Transverse colon (tissue), 4 donors: ENCODE measurements at regions of chr15 and their contacts with region 1.

Region 1: DNA sequence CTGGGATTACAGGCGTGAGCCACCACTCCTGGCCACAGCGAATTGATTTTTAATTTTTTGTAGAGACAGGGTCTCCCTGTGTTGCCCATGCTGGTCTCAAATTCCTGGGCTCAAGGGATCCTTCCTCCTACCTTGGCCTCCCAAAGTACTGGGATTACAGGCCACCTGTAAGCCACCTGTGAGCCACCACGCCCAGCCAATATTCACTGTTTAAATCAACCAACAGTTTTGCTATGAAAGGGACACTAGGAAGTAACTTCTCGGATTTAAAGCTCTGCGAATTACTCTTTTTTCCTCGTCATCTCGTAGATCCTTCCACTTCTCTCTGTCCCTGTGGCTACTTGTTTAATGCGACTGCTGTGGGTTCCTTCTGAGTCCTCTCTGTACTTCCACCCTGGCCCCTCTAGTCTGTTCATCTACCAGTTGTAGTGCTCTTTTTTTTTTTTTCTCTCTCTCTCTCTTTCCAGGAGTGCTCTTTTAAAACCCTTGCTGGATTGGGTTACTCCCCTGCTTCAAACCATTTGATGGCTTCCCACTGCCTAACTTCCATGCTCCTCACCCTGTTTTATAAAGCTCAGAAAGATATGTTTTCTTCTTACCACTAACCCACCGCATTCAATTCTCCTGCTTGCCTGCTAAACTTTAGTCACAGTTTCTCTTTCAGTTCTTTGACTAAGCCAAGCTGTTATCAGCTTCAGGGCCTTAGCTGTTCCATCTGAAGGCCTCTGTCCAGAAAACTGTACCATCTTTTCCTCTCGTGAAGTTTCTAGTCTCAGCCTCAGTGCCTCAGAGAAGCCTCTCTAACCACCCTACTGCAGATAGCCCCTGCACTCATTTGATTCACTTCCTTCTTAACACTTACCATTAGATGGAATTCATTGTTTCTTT is 12.4 kb downstream of the RTF1 start:
- DNase-seq: peak; percentile 21
- H3K4me3 ChIP-seq: no peak overlapping the region
- H3K27ac ChIP-seq: peak overlapping the region; percentile 26 to 38 (median 28)
- H3K4me1 ChIP-seq: peaks cover 0 to 13% (median 10%) of the 10 kb centered on the region in 4 donors
- H3K27me3 ChIP-seq: no peaks in the 10 kb centered on the region
- CTCF ChIP-seq: no peak
- EP300 ChIP-seq: no peak
- POLR2A ChIP-seq: no peak

Region 2: DNA sequence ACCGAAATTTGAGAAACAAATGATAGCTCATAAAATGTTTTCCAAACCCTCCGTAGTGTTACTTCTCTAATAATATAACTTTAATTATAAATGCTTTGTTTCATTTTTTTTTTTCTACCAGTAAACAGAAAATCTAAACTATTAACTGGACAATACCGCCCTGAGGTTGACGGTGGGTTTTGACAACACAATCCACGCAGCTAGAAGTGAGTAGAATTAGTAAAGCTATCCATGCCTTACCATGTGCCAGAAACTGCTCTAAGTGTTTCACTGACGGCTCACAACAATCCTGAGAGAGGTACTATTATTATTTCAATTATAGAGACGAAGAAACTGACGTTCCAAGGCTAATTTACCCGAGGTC is 27.4 kb before region 1 on chr15:
- in situ Hi-C with region 1: no loop called
- intact Hi-C with region 1: loop called (anchors 1 kb)
- DNase-seq: no peak
- H3K4me3 ChIP-seq: peak overlapping the region; percentile 65 to 85 (median 74)
- H3K27ac ChIP-seq: peak overlapping the region; percentile 89 to 94 (median 90)
- H3K4me1 ChIP-seq: peaks cover 0 to 19% (median 4%) of the 10 kb centered on the region in 4 donors
- H3K27me3 ChIP-seq: no peaks in the 10 kb centered on the region
- CTCF ChIP-seq: no peak
- EP300 ChIP-seq: no peak
- POLR2A ChIP-seq: no peak

Region 3: GRCh38 chr15:41544650-41545015 is 115.4 kb after region 1 on chr15:
- in situ Hi-C with region 1: loop called in 1 of 4 experiments (anchors 25 kb)
- intact Hi-C with region 1: no loop called
- DNase-seq: peak; percentile 31
- H3K4me3 ChIP-seq: peak overlapping the region in 3 of 4 donors; percentile 77 to 97 (median 84)
- H3K27ac ChIP-seq: peak overlapping the region; percentile 76 to 83 (median 80)
- H3K4me1 ChIP-seq: peaks cover 0 to 6% (median 5%) of the 10 kb centered on the region in 4 donors
- H3K27me3 ChIP-seq: no peaks in the 10 kb centered on the region
- CTCF ChIP-seq: no peak
- EP300 ChIP-seq: no peak
- POLR2A ChIP-seq: no peak

Region 4: DNA sequence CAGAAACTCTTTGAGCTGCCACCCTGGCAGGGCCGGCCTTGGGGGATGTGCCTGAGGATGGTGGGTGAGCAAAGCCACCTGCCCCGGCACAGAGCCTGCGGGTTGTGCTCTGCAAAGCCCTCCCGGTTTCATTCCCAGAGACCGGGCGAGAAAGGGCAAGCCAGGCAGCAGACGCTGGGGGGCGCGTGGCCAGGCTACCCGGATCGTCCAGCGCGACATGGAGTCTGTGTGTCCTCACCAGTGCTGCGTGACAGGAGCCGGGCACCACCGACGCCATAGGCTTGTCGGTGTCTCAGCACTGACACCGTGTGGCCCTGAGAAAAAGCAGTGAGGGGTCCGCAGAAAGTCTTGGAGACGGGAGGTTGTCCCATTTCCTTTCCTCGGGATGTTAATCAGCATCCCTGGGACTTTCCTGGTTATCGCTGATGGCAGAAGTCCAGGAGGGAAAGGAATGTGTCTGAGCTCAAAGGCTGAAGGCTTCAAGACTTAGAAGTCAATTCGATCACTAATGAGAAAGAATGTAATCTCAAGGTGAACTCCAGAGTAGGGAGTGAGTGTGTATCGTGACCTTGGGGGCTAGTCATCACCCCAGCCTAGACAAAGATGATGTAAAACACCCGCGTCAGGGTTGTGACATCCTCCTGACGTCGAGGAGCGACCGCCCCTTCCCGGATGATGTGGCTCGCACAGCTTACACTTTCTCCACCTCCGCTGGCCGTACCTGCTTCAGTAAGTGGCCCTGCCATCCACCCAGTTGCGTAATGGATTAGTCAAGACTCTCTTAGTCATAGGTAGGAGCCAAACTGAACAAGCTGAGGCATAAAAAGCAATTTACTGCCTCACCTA is 627.9 kb after region 1 on chr15:
- in situ Hi-C with region 1: no loop called
- intact Hi-C with region 1: no loop called
- DNase-seq: peak; percentile 86
- H3K4me3 ChIP-seq: peak overlapping the region in 3 of 4 donors; percentile 0 to 36 (median 5)
- H3K27ac ChIP-seq: peak overlapping the region; percentile 45 to 78 (median 70)
- H3K4me1 ChIP-seq: peaks cover 4 to 12% (median 6%) of the 10 kb centered on the region in 4 donors
- H3K27me3 ChIP-seq: no peaks in the 10 kb centered on the region
- CTCF ChIP-seq: peak; percentile 43 to 70 (median 49)
- EP300 ChIP-seq: no peak
- POLR2A ChIP-seq: peak; percentile 25

Region 5: DNA sequence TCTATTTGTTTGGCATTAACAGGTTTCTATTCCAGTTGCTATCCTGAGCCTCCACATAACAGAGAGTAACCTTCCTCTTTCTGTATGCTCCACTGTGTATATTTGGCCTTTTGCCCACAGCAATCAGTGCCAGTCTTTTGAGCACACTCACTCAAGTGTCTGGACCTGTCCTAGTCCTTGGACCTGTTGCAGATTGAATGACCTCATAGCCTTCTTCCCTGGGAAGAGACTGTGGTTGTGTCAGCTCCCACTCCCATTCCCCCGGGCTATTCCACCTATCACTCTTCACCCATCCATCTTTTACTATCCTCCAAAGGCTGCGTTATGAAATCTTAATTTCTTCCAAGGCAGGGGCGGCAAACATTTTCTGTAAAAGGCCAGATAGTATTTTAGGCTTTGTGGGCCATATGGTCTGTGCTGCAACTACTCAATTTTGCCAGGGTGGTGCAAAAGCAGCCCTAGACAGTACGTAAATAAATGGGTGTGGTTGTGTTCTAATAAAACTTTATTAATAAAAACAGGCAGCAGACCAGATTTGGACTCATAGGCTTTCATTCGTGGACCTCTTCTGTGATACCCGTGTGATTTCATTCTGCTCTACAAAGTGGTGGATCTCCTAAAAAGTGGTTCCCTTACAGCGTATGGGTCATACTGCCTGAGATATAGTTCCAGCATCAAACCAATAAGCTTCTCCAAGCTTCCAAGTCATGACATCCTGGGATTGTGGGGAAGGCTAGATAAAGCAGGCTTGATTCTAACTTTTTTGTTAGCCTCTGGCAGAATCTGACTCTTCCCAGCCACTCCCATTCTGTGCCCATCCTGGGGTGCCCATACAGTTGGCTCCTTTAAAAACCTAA is 1250.3 kb after region 1 on chr15:
- in situ Hi-C with region 1: no loop called
- intact Hi-C with region 1: no loop called
- DNase-seq: no peak
- H3K4me3 ChIP-seq: no peak overlapping the region
- H3K27ac ChIP-seq: no peak overlapping the region
- H3K4me1 ChIP-seq: no peaks in the 10 kb centered on the region
- H3K27me3 ChIP-seq: no peaks in the 10 kb centered on the region
- CTCF ChIP-seq: no peak
- EP300 ChIP-seq: no peak
- POLR2A ChIP-seq: no peak